ACHN (cell line): ENCODE measurements at regions of chr1 and their contacts with region 1.

Region 1: DNA sequence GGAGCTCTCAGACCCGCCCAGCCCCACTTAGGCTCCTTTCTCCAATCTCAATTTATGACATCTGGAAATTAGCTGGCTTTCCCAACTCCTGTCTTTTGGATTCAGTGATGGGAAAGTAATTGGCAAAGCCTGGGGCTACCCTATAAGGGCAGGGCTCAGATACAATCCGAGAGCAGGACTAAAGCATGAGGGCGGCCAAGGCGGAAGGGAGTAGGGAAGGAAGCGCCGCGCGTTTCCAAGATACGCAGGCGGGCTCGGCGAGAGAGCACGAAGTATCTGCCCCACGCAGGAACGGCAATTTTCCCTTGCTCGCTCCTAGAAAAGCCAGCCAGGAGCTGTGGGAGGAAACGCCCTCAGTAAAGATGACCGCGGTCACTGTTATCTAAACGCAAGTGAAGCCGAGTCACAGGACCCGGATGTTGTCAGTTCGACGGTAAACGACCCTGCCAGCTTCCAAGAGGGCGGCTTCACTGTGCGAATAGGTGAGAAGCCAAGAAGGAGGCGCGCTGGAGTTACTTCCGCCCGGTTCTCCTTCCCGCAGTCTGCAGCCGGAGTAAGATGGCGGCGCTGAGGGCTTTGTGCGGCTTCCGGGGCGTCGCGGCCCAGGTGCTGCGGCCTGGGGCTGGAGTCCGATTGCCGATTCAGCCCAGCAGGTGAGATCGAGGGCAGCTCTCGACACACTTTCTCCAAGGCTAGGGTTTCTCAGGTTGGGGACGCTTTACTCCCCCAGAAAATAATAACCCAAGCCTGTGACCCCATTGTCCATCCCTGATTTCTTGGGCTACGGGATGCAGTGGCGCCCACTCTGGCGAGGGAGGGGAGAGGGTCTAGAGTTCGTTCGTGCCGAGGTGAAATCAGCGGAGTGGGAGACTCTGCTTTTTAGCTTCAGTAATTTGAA is at the start of gene NDUFS2:
- DNase-seq: peak; percentile 99

Region 2: DNA sequence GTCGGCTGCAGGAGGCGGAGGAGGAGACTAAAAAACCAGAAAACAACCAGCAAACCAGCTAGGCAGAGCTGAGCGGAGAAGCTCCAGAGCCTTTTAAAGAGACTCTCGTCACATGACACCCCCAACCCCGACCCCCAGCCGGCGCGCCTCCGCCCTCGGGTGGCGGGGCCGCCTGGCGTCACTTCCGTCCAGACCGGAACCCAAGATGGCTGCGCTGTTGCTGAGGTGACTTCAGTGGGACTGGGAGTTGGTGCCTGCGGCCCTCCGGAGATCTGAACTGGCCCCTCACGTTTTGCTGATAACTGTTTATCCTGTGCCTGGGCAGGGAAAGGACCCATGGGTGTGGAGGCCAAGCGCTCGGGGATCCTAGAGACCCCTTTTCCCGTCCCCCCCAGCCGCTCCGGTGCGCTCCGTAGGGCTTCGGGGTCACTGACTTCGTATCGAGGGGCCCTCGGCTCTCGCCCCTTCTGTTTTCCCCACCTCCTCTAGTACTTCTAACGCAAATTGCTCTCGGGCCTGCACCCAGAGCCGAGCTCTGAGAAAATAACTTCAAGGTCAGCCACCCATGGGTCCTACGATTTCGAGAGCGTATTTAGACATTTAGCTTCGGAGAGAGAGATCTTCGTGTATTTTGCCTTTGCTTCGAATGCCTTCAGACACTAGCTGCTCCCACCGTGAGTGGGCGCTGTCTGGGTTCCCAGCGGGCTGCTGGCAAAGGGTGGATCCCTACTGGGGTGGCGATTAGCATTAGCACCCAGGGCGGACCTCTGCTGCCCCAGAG is 112.3 kb after region 1 on chr1 and contains the start of gene SDHC:
- in situ Hi-C with region 1: loop called (anchors 25 kb)
- DNase-seq: peak; percentile 92